ENCODE measurements at regions of chr2 and their contacts with region 1.

Region 1: DNA sequence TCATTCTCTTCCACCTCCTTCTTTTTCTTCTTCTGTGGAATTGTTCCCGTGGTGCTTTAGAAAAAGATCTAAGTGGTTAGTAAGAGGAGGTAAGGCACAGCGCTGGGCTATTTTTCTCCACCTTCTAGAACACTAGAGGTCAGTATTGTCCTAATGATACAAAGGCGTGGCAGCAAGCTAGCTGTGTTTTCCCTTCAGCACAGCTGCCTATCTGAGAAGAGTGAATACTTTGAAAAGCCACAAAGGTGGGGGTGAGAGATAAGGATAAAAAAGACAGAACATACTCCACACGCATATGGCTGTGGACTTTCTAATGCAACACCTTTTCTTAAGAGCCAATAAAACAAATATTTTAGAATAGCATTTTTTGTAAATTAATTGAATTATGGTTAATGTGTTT is 2.1 kb downstream of the CNTNAP5 start:
- DNase-seq: peak; percentile 64
- ATAC-seq: peak; percentile 98
- H3K4me3 ChIP-seq: no peak overlapping the region
- H3K27ac ChIP-seq: no peak overlapping the region
- H3K4me1 ChIP-seq: no peaks in the 10 kb centered on the region
- H3K27me3 ChIP-seq: no peaks in the 10 kb centered on the region
- CTCF ChIP-seq: peak; percentile 85
- EP300 ChIP-seq: no peak
- POLR2A ChIP-seq: no peak
- RAD21 ChIP-seq: peak; percentile 61

Region 2: DNA sequence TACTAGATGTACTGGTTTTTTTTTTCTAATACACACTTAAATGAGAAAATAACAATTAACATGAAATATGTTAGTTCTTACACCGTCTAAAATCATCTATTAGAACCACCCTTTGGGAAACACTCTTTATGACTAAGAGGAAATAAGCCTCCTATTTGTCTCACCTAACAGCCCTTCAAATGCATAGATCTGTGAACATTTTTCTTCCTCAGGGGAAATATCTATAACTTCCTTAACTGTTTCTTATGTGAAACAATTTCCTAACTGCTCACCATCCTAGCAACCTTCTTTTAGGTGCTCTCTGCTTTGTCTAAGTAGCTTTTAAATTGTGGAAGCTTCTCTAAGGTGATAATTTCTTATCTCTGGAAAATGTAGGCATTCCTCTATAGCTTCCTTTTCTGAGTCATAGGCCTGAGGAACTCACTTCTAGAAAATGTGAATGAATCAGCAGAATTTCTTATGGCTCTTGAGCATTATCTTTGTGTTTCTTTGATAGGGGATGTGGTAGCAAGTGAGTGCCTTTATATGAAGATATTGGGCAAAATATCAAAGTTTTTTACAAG is 54.1 kb after region 1 on chr2:
- CTCF ChIA-PET with region 1: no interaction called
- POLR2A ChIA-PET with region 1: no interaction called
- in situ Hi-C with region 1: no loop called
- intact Hi-C with region 1: no loop called
- DNase-seq: no peak
- ATAC-seq: no peak
- H3K4me3 ChIP-seq: no peak overlapping the region
- H3K27ac ChIP-seq: no peak overlapping the region
- H3K4me1 ChIP-seq: no peaks in the 10 kb centered on the region
- H3K27me3 ChIP-seq: no peaks in the 10 kb centered on the region
- CTCF ChIP-seq: no peak
- EP300 ChIP-seq: no peak
- POLR2A ChIP-seq: no peak
- RAD21 ChIP-seq: no peak

Region 3: GRCh38 chr2:124566518-124566970 is 539.4 kb after region 1 on chr2:
- CTCF ChIA-PET with region 1: no interaction called
- POLR2A ChIA-PET with region 1: no interaction called
- in situ Hi-C with region 1: no loop called
- intact Hi-C with region 1: loop called (anchors 10 kb)
- DNase-seq: peak; percentile 99
- ATAC-seq: peak; percentile 89
- H3K4me3 ChIP-seq: no peak overlapping the region
- H3K27ac ChIP-seq: peak overlapping the region; percentile 60
- H3K4me1 ChIP-seq: peaks cover 63% of the 10 kb centered on the region
- H3K27me3 ChIP-seq: no peaks in the 10 kb centered on the region
- CTCF ChIP-seq: no peak
- EP300 ChIP-seq: peak; percentile 89 to 97; a peak in 3 of 4 replicates
- POLR2A ChIP-seq: no peak
- RAD21 ChIP-seq: no peak

Region 4: GRCh38 chr2:124753842-124754241 is 726.7 kb after region 1 on chr2:
- CTCF ChIA-PET with region 1: no interaction called
- POLR2A ChIA-PET with region 1: no interaction called
- in situ Hi-C with region 1: no loop called
- intact Hi-C with region 1: loop called (anchors 1 kb)
- DNase-seq: peak; percentile 13
- ATAC-seq: peak; percentile 75
- H3K4me3 ChIP-seq: no peak overlapping the region
- H3K27ac ChIP-seq: no peak overlapping the region
- H3K4me1 ChIP-seq: no peaks in the 10 kb centered on the region
- H3K27me3 ChIP-seq: no peaks in the 10 kb centered on the region
- CTCF ChIP-seq: peak; percentile 44
- EP300 ChIP-seq: no peak
- POLR2A ChIP-seq: no peak
- RAD21 ChIP-seq: no peak

Region 5: GRCh38 chr2:124810132-124810531 is 783.0 kb after region 1 on chr2:
- CTCF ChIA-PET with region 1: interaction called, 4 read pairs
- POLR2A ChIA-PET with region 1: no interaction called
- in situ Hi-C with region 1: loop called (anchors 5 kb)
- intact Hi-C with region 1: loop called (anchors 1 kb)
- DNase-seq: peak; percentile 60
- ATAC-seq: peak; percentile 95
- H3K4me3 ChIP-seq: no peak overlapping the region
- H3K27ac ChIP-seq: no peak overlapping the region
- H3K4me1 ChIP-seq: no peaks in the 10 kb centered on the region
- H3K27me3 ChIP-seq: no peaks in the 10 kb centered on the region
- CTCF ChIP-seq: peak; percentile 79
- EP300 ChIP-seq: no peak
- POLR2A ChIP-seq: no peak
- RAD21 ChIP-seq: peak; percentile 45